HEK293T (cell line): ENCODE measurements at regions of chr1 and their contacts with region 1.

Region 1: GRCh38 chr1:114648502-114648901 is 21.3 kb downstream of the DENND2C start:
- DNase-seq: no peak

Region 2: GRCh38 chr1:114550336-114550735 is 98.2 kb before region 1 on chr1:
- CTCF ChIA-PET with region 1: interaction called, 14 read pairs
- POLR2A ChIA-PET with region 1: no interaction called
- DNase-seq: no peak

Region 3: GRCh38 chr1:114627107-114627506 is 21.4 kb before region 1 on chr1:
- CTCF ChIA-PET with region 1: no interaction called
- POLR2A ChIA-PET with region 1: no interaction called
- DNase-seq: no peak